A549 (cell line): ENCODE measurements at regions of chr13 and their contacts with region 1.

Region 1: GRCh38 chr13:98484289-98485219 is 92.4 kb downstream of the STK24 start:
- DNase-seq: peak; percentile 91 to 96
- ATAC-seq: peak; percentile 93 to 98
- H3K4me3 ChIP-seq: peak overlapping the region; percentile 26; the same call in 2 of the 3 replicates
- H3K27ac ChIP-seq: peak overlapping the region; percentile 93 to 98
- H3K4me1 ChIP-seq: peaks cover 71% of the 10 kb centered on the region
- CTCF ChIP-seq: no peak
- EP300 ChIP-seq: peak; percentile 69 to 87; a peak in 3 of 5 replicates
- POLR2A ChIP-seq: no peak
- RAD21 ChIP-seq: peak; percentile 26 to 45

Region 2: DNA sequence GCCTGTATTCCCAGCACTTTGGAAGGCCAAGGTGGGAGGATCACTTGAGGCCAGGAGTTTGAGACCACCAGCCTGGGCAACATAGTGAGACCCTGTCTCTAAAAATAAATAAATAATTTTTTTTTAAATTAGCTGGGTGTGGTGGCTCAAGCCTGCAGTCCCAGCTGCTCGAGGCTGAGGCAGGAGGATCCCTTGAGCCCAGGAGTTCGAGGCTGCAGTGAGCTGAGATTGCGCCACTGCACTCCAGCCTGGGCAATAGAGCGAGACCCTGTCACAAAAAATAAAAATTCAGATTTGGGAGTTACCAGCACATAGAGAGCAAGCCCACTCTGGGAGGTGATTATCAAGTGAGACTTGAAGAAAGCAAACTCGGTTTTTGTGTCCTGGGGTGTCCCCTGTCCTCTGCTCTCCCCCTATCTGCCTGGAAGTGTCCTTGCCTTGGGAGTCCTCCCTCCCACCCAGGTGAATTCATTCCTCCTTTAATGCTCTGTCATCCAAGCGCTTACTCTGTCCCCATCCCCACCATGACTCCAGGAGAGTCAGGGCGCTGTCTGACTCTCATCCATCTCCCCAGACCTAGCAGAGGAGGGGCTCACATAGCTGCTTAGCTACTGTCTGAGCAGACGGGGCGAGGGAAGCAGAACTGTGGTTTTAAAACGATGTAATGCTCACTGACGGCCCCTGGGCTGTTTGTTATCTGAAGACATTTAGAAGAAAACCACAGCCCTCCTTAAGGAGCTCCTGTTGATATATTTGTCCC is 54.4 kb before region 1 on chr13:
- CTCF ChIA-PET with region 1: no interaction called
- POLR2A ChIA-PET with region 1: no interaction called
- DNase-seq: no peak
- ATAC-seq: no peak
- H3K4me3 ChIP-seq: no peak overlapping the region
- H3K27ac ChIP-seq: no peak overlapping the region
- H3K4me1 ChIP-seq: no peaks in the 10 kb centered on the region
- CTCF ChIP-seq: no peak
- EP300 ChIP-seq: no peak
- POLR2A ChIP-seq: no peak
- RAD21 ChIP-seq: no peak

Region 3: DNA sequence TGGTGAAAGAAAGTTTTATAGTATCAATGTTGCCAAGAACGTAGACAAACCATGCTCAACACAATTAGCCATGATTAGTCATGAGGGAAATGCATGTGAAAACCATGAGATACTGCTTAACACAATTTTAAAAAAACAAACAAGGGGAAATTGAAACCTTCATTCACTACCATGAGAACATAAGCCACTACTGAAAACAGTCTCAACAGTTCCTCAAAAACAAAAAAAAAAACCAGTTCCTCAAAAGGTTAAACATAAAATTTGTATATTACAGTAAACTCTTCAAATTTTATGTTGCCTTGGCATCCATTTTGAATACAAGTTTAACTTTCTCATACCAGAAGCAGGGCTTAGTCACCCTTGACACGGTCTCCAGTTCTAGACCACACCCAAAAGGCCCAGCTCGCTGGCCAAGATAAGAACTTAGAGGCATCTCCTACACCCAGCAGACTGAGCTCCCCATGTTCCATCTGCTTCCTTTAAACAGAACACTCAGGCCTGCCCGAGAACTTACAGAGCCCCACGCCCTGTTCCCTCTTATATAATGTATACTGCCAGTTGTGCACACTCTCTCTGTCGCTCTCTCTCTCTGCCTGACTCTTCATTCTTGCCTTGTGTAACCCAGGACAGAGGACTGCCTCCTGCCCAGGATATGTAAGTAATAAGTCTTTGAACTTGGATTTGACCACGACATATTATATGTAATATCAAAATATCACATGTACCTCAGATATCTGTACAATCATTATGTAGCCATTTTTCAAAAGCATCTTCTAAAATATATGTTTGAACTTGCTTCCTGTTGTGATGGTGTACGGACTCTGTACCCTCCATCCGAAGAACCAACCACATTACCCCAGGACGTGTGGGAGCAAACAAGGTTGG is 25.0 kb after region 1 on chr13:
- CTCF ChIA-PET with region 1: interaction called, 12 read pairs
- POLR2A ChIA-PET with region 1: interaction called, 9 read pairs
- DNase-seq: peak; percentile 28 to 76
- ATAC-seq: peak; percentile 79 to 91; a peak in 5 of 6 replicates
- H3K4me3 ChIP-seq: no peak overlapping the region
- H3K27ac ChIP-seq: peak overlapping the region; percentile 82
- H3K4me1 ChIP-seq: peaks cover 36% of the 10 kb centered on the region
- CTCF ChIP-seq: no peak
- EP300 ChIP-seq: no peak
- POLR2A ChIP-seq: no peak
- RAD21 ChIP-seq: no peak

Region 4: GRCh38 chr13:98576963-98577822 is 92.6 kb after region 1 on chr13 and contains the start of gene STK24:
- CTCF ChIA-PET with region 1: interaction called, 3 read pairs
- POLR2A ChIA-PET with region 1: interaction called, 15 read pairs
- DNase-seq: peak in 1 of 2 experiments; percentile 56
- ATAC-seq: peak; percentile 72 to 87
- H3K4me3 ChIP-seq: peak within 1 kb of the TSS; percentile 99
- H3K27ac ChIP-seq: peak within 1 kb of the TSS; percentile 99 to 100
- H3K4me1 ChIP-seq: peaks cover 42% of the 10 kb centered on the region
- CTCF ChIP-seq: no peak
- EP300 ChIP-seq: no peak
- POLR2A ChIP-seq: peak; percentile 70
- RAD21 ChIP-seq: no peak
- polyA plus RNA-seq, gene STK24: 55.6 and 58.9 TPM in 2 replicates

Region 5: DNA sequence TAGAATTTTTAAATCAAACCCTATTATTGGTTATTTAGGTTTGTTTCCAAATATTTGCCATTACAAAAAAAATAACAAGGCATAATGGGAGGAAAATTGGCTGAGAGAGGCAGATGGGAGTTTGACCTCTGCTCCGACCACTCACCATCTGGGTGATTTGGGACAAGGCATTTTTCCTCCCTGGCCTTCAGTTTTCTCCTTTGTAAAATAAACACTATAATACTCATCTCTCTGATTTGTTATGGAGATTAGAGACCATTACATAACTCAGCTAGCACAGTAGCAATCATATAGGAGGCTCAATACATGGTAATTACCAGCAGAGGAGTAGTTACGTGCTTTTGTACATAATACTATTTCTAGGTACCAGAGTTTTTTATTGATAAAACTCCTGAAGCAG is 162.6 kb after region 1 on chr13:
- CTCF ChIA-PET with region 1: no interaction called
- POLR2A ChIA-PET with region 1: no interaction called
- DNase-seq: no peak
- ATAC-seq: no peak
- H3K4me3 ChIP-seq: no peak overlapping the region
- H3K27ac ChIP-seq: no peak overlapping the region
- H3K4me1 ChIP-seq: 0 out of 3 replicates have a peak, but pooled peaks cover 3% of the 10 kb centered on the region
- CTCF ChIP-seq: no peak
- EP300 ChIP-seq: no peak
- POLR2A ChIP-seq: no peak
- RAD21 ChIP-seq: no peak